ENCODE measurements at regions of chr11 and their contacts with region 1.

Region 1: GRCh38 chr11:93662177-93662575 is 694 bp downstream of the CEP295 start:
- H3K4me3 Mint-ChIP-seq: peak overlapping the region; percentile 84
- H3K27ac Mint-ChIP-seq: peak overlapping the region; percentile 81
- H3K4me1 Mint-ChIP-seq: no peaks in the 10 kb centered on the region
- H3K27me3 Mint-ChIP-seq: no peaks in the 10 kb centered on the region

Region 2: DNA sequence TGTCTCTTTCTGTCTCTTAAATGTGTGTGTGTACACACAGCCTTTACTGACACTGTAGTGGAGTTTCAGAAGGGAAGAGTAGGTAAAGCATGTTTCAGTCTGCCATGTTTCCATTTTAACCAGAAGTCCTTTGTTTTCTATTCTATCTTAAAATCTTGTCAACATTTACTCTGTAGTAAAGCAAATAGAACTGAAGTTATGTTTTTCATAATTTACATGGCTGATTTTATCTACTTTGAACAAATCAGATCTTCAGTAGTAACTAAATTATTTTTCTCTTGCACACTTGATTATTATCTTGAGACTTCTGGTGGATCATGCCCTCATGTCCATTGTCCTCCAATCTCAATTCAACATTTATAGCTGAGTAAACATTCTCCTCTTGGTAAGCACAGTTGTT is 345.1 kb before region 1 on chr11:
- intact Hi-C with region 1: no loop called
- H3K4me3 Mint-ChIP-seq: no peak overlapping the region
- H3K27ac Mint-ChIP-seq: no peak overlapping the region
- H3K4me1 Mint-ChIP-seq: no peaks in the 10 kb centered on the region
- H3K27me3 Mint-ChIP-seq: no peaks in the 10 kb centered on the region

Region 3: GRCh38 chr11:93608364-93608763 is 53.8 kb before region 1 on chr11:
- intact Hi-C with region 1: loop called (anchors 5 kb)
- H3K4me3 Mint-ChIP-seq: no peak overlapping the region
- H3K27ac Mint-ChIP-seq: peak overlapping the region; percentile 85
- H3K4me1 Mint-ChIP-seq: peaks cover 20% of the 10 kb centered on the region
- H3K27me3 Mint-ChIP-seq: no peaks in the 10 kb centered on the region

Region 4: DNA sequence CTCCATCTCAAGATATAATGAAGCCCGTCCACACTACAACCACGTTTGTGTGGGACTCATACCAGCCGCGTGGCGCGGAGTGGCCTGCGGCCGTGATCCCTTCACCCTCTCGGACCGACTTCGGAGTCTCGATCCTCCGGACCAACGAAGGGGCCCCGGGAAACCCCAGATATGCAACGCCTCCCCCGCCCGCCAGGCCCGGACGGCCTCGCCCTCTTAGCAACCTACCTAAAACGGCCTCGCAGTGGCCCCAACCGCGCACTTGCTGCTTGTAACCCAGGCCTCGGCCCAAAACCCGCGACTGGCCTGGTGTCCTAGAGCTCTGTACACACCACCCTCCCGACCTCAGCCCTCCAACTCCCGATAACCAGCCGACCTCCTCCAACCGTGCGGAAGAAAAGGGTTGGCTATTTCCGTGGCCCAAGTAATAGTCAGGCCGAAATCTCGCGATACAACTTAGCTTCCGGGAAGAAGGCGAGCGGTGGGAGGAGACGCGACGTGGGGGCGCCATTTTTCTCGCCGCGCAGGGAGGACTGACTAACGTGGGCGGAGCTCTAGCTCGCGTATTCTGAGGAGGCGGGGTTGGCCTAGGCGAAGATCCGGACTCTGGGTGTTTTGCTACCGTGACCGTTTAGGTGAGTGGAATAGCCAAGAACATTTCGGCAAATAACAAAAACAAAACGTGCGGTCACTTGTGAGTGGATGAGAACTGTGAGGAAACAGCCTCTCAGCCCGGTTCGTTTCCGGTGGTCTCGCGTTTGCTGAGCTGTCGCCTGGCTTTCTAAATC is 79.1 kb after region 1 on chr11 and contains the starts of genes C11orf54 and TAF1D:
- intact Hi-C with region 1: loop called (anchors 5 kb)
- H3K4me3 Mint-ChIP-seq: peak within 1 kb of the TSS; percentile 99
- H3K27ac Mint-ChIP-seq: peak within 1 kb of the TSS; percentile 100
- H3K4me1 Mint-ChIP-seq: peaks cover 53% of the 10 kb centered on the region
- H3K27me3 Mint-ChIP-seq: no peaks in the 10 kb centered on the region

Region 5: DNA sequence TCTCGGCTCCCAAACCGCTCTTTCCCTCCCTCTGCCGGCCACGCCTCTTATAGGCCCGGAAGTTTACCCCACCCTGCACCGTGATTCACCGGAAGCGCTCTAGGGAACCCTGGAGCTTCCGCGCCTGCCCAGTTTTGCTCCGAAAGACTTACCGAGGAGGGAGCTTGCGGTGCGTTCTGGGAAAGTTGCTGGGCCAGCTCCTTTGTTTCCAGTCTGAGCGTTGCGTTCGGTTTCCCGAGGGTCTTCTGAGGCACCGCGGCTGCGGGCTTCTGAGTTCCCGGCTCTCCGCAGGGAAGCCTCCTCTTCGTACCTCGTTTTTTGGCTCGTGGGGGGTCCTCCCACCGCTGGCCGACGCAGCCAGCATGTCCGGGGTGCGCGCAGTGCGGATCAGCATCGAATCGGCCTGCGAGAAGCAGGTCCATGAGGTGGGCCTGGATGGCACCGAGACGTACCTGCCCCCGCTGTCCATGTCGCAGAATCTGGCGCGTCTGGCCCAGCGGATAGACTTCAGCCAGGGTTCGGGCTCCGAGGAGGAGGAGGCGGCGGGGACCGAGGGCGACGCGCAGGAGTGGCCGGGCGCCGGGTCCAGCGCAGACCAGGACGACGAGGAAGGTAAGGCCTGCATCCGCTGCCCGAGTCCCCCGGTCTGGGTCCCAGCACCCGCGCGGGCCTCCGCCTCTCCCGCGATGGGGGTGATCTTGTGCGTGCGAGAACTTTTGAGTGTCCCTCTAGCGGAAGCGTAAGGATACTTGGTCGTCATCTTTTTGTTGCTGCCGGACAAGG is 122.2 kb after region 1 on chr11 and contains the start of gene MED17:
- intact Hi-C with region 1: loop called (anchors 5 kb)
- H3K4me3 Mint-ChIP-seq: peak within 1 kb of the TSS; percentile 88
- H3K27ac Mint-ChIP-seq: peak within 1 kb of the TSS; percentile 90
- H3K4me1 Mint-ChIP-seq: peaks cover 31% of the 10 kb centered on the region
- H3K27me3 Mint-ChIP-seq: no peaks in the 10 kb centered on the region

Region 6: DNA sequence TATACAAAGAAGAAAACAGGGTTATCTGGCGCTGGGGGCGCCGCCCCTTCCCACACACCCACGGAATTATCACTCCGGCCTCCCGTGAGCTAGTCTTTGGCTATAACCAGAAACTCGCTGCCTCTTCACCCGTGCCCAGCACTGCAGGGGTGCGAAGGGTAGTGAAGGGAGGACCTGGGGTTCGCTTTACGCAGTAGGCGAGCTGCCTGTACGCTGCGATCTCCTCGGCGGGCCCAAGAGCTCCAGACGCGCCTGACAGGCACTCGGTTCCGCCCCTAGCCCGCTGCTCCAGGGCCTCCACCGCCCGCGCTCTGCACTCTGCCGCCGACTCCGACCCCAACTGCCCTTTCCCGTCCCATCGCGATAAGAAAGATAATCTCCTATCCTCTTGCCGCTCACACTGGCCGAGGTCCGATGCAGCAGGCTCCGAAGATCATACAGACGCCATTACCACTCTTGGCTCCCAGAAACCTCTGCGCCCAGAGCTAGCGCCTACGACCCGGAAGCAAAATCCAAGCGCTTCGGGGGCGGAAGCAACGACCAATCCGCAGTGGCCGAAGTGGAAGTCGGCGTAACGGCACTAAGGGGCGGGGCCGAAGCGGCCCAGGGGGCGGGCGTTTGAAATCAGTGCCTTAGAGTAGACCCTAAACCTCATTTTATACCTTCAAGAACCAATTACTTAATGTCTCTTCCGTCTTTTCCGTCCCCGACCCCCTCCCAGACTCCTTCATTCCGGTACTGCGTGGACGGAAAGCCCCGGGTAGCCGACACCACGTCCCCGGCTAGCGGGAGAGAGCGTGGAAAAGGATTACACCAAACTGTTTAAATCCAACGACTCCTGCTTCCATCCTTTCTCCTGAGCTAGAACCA is 1311.2 kb after region 1 on chr11 and contains the starts of genes CWC15 and KDM4D:
- intact Hi-C with region 1: loop called (anchors 5 kb)
- H3K4me3 Mint-ChIP-seq: peak within 1 kb of the TSS; percentile 97
- H3K27ac Mint-ChIP-seq: peak within 1 kb of the TSS; percentile 97
- H3K4me1 Mint-ChIP-seq: peaks cover 12% of the 10 kb centered on the region
- H3K27me3 Mint-ChIP-seq: peaks cover 7% of the 10 kb centered on the region